ENCODE measurements at regions of chr10 and their contacts with region 1.

Region 1: GRCh38 chr10:102869258-102870198 is at the start of gene AS3MT:
- DNase-seq: no peak
- H3K4me3 ChIP-seq: peak within 1 kb of the TSS; percentile 59
- H3K27ac ChIP-seq: no peak within 1 kb of the TSS
- H3K27me3 ChIP-seq: no peaks in the 10 kb centered on the region
- CTCF ChIP-seq: no peak
- polyA plus RNA-seq, gene AS3MT: 4.0 and 6.7 TPM in 2 replicates

Region 2: GRCh38 chr10:101060036-101060950 is 1809.2 kb before region 1 on chr10:
- CTCF ChIA-PET with region 1: interaction called, 13 read pairs
- POLR2A ChIA-PET with region 1: no interaction called
- DNase-seq: peak; percentile 85
- H3K4me3 ChIP-seq: peak overlapping the region; percentile 100
- H3K27ac ChIP-seq: peak overlapping the region; percentile 98
- H3K27me3 ChIP-seq: no peaks in the 10 kb centered on the region
- CTCF ChIP-seq: peak; percentile 88